Activated naive CD4-positive, alpha-beta T cell treated with anti-CD3 and anti-CD28 coated beads for 36 hours (primary cell): ENCODE measurements at regions of chr4 and their contacts with region 1.

Region 1: DNA sequence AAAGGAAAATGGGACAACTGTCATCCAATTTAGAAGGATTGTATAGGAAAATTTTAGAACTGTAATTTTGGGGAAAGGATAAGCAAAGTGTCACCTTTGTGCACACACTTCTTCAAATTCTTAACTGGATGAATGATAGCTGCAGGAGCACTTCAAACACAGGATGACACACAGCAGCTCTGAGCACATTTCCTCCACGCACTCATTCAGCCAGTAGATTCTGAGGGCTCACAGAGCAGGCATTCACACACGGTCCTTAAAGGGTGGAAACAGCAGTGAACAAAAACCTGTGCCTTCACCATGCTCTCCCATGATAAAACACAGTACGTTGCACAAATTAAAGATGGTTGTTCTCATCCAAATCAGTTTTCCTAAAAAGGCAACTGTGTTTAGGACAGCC is 38.5 kb upstream of the KLF3 start:
- DNase-seq: peak; percentile 62
- H3K4me3 Mint-ChIP-seq: no peak overlapping the region
- H3K27ac Mint-ChIP-seq: no peak overlapping the region
- H3K4me1 Mint-ChIP-seq: peaks cover 15% of the 10 kb centered on the region
- H3K27me3 Mint-ChIP-seq: no peaks in the 10 kb centered on the region

Region 2: DNA sequence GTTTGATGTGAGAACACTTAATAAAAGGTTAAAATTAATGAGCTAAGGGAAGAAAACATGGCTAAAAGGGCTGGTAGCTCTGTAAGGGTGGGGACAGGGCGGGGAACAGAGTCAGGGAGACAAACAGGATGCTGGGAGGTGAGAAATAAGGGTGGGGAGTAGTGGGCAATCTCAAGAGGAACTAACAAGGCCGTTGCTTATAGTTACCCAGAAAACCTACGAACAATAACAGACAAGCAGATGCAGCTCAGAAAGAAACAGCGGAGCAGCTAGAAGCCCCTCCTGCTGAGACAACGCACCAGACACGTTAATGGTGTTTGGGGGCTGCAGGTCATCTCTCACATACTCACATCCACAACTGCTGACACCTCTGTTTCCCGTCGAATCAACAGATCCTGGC is 28.8 kb after region 1 on chr4:
- CTCF ChIA-PET with region 1: interaction called, 3 read pairs
- intact Hi-C with region 1: loop called (anchors 2 kb)
- DNase-seq: no peak
- H3K4me3 Mint-ChIP-seq: peak overlapping the region; percentile 78
- H3K27ac Mint-ChIP-seq: no peak overlapping the region
- H3K4me1 Mint-ChIP-seq: peaks cover 50% of the 10 kb centered on the region
- H3K27me3 Mint-ChIP-seq: no peaks in the 10 kb centered on the region

Region 3: GRCh38 chr4:38768968-38769394 is 143.5 kb after region 1 on chr4:
- CTCF ChIA-PET with region 1: no interaction called
- intact Hi-C with region 1: no loop called
- DNase-seq: no peak
- H3K4me3 Mint-ChIP-seq: no peak overlapping the region
- H3K27ac Mint-ChIP-seq: no peak overlapping the region
- H3K4me1 Mint-ChIP-seq: no peaks in the 10 kb centered on the region
- H3K27me3 Mint-ChIP-seq: no peaks in the 10 kb centered on the region

Region 4: DNA sequence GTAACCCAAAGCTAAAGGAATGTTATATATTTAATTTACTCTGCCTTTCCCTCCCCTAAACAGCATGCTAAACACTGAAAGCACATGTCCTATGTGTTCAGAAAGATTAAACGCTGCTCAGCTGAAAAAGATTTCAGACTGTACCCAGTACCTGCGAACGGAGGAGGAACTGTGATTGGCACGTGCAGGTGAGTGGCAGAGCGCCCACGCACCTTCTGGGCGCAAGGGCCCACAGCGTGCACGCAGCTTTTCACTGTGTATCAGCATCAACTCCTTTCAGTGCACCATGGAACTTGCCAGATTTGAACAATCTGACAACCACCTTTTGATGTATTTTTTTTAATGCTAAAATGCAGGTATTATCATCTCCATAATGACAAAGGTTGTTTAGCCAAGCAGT is 653.0 kb after region 1 on chr4:
- CTCF ChIA-PET with region 1: no interaction called
- intact Hi-C with region 1: no loop called
- DNase-seq: no peak
- H3K4me3 Mint-ChIP-seq: no peak overlapping the region
- H3K27ac Mint-ChIP-seq: no peak overlapping the region
- H3K4me1 Mint-ChIP-seq: no peaks in the 10 kb centered on the region
- H3K27me3 Mint-ChIP-seq: no peaks in the 10 kb centered on the region